ENCODE measurements at regions of chr10 and their contacts with region 1.

Region 1: GRCh38 chr10:112314822-112315474 is 31.7 kb downstream of the TECTB start:
- DNase-seq: peak; percentile 77
- ATAC-seq: peak; percentile 71

Region 2: DNA sequence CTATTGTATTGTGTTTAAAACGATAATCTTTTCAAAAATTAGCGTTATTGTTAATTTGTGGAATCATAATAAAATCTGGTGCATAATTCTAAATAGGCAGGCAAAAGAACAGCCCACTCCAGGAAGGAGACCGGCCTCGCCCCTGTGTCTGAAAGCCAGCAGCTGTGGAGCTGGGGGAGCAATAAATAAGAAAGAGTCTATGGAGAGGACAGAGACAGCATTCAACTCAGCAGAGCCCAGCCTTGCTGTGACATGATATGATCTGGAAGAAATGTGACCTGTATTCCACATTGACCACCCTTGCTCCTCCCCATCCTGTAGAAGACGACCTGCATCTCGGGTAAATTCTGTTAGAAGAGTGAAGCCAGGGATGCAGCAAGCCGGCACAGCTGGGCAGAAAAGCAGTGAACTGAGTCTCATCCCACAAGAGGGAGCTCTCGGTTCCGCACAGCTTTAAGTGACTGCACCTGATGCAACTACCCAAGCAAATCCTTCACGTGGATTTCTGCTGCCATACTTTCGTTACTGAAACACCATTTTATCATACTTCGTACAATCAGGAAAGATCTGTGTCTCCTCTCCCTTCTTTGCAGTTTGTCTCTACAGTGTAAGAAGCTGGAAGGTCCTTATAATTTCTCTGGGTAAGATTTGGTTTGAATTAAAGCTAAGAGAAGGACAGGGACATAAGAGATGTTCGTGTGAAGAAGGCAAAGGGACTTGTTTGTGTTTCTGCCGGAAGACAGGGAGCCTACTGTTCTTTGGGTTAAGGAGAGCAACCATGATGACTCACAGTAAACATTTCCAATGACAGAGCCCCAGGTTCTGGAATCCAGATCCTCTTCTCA is 558.5 kb before region 1 on chr10:
- intact Hi-C with region 1: loop called (anchors 10 kb)
- DNase-seq: no peak
- ATAC-seq: no peak

Region 3: GRCh38 chr10:112137154-112137987 is 177.6 kb before region 1 on chr10:
- intact Hi-C with region 1: loop called (anchors 10 kb)
- DNase-seq: no peak
- ATAC-seq: peak; percentile 70

Region 4: GRCh38 chr10:112434988-112435619 is 120.2 kb after region 1 on chr10:
- intact Hi-C with region 1: loop called (anchors 10 kb)
- DNase-seq: no peak
- ATAC-seq: no peak

Region 5: GRCh38 chr10:113169853-113170460 is 855.0 kb after region 1 on chr10:
- intact Hi-C with region 1: no loop called
- DNase-seq: no peak
- ATAC-seq: no peak

Measured in Right ventricle myocardium inferior (tissue), 1 donor.